Ascending aorta (tissue), 2 donors: ENCODE measurements at regions of chr6 and their contacts with region 1.

Region 1: DNA sequence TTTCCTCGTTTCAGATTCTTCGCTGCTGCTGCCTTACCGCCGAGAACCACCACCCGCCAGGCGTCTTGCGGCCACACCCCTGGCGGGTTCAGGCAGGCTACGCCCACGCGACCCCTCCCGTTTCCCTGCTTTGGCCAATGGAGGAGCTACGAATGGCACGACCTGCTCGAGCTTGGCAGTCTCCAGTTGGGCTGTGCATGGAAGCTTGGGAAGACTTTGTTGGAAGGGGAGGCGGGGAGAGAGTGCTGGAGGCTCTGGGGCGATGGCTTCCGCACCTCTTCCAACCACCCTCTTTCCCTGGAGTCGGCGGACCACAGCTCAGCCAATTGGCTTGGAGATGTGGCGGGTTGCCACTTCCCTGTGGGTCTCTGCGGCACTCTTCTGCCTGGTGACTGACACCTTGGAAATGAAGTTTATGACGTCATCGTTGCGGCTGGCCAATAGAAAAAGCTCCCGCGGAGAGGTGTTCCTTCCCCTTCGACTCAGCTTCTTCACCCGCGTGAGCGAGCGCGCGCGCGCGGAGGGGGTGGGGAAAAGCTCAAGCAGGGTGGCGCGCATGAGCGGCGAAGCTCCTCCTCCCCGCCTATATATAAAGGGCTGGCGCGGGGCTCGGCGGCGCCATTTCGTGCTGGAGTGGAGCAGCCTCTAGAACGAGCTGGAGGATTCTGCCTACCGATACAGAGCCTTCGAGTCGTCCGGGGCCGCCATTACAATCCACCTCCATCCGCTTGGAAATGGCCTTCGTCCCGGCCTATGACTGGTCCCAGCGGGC is 3.4 kb downstream of the BRD2 start:
- DNase-seq: peak; percentile 99 to 100
- H3K4me3 ChIP-seq: peak overlapping the region; percentile 86 to 95
- H3K27ac ChIP-seq: peak overlapping the region; percentile 98 to 99
- H3K4me1 ChIP-seq: peaks cover 3 to 26% of the 10 kb centered on the region in 2 donors
- H3K27me3 ChIP-seq: no peaks in the 10 kb centered on the region
- CTCF ChIP-seq: peak in 1 of 3 experiments; percentile 19

Region 2: GRCh38 chr6:31541658-31542521 is 1429.9 kb before region 1 on chr6 and contains the start of gene DDX39B:
- intact Hi-C with region 1: loop called (anchors 5 kb)
- DNase-seq: peak; percentile 83 to 97
- H3K4me3 ChIP-seq: peak within 1 kb of the TSS; percentile 76 to 88
- H3K27ac ChIP-seq: peak within 1 kb of the TSS; percentile 94 to 95
- H3K4me1 ChIP-seq: peaks cover 13 to 32% of the 10 kb centered on the region in 2 donors
- H3K27me3 ChIP-seq: no peaks in the 10 kb centered on the region
- CTCF ChIP-seq: peak in 1 of 3 experiments; percentile 1
- total RNA-seq, gene DDX39B: 134 TPM

Region 3: GRCh38 chr6:31815025-31815838 is 1156.5 kb before region 1 on chr6 and contains the starts of genes HSPA1A and HSPA1L:
- intact Hi-C with region 1: loop called (anchors 10 kb)
- DNase-seq: peak; percentile 90 to 98
- H3K4me3 ChIP-seq: peak within 1 kb of the TSS; percentile 50 to 72
- H3K27ac ChIP-seq: peak within 1 kb of the TSS; percentile 96
- H3K4me1 ChIP-seq: peaks cover 7 to 24% of the 10 kb centered on the region in 2 donors
- H3K27me3 ChIP-seq: no peaks in the 10 kb centered on the region
- CTCF ChIP-seq: no peak
- total RNA-seq, gene HSPA1A: 288 TPM
- total RNA-seq, gene HSPA1L: not detected

Region 4: DNA sequence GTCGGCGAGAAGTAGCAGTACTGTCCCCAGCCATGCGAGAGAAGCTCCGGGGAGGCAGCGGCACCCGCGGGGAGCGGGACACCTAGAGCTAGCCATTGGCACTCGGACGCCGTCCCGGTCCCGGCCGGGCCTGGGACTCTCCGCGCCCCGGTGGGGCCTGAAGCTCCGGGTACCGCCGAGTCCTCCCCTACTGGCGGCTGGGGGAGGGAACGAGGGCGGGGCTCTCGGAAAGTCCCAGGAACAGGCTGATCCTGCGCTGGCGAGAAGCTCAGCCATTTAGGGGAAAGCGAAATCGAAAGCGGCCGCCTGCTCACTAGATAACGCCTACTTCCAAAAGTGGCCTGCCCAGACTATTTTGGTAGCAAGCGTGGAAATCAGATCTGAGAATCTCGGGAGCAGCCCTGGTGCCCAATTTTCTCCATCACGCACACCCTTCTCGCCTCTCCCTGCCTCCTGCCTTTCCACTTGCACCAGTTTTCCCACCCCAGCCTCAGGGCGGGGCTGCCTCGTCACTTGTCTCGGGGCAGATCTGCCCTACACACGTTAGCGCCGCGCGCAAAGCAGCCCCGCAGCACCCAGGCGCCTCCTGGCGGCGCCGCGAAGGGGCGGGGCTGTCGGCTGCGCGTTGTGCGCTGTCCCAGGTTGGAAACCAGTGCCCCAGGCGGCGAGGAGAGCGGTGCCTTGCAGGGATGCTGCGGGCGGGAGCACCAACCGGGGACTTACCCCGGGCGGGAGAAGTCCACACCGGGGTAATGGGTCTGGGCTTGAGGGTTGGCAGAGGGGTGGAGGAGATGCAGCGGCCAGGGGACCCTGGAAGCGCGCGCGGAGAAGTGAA is 118.0 kb before region 1 on chr6 and contains the starts of genes PSMB9 and TAP1:
- intact Hi-C with region 1: loop called (anchors 2 kb)
- DNase-seq: peak; percentile 89 to 97
- H3K4me3 ChIP-seq: peak within 1 kb of the TSS; percentile 86 to 89
- H3K27ac ChIP-seq: peak within 1 kb of the TSS; percentile 92 to 97
- H3K4me1 ChIP-seq: peaks cover 4 to 9% of the 10 kb centered on the region in 2 donors
- H3K27me3 ChIP-seq: no peaks in the 10 kb centered on the region
- CTCF ChIP-seq: peak; percentile 88 to 95 (median 90)
- total RNA-seq, gene PSMB9: 42.8 TPM
- total RNA-seq, gene TAP1: 51.2 TPM

Region 5: DNA sequence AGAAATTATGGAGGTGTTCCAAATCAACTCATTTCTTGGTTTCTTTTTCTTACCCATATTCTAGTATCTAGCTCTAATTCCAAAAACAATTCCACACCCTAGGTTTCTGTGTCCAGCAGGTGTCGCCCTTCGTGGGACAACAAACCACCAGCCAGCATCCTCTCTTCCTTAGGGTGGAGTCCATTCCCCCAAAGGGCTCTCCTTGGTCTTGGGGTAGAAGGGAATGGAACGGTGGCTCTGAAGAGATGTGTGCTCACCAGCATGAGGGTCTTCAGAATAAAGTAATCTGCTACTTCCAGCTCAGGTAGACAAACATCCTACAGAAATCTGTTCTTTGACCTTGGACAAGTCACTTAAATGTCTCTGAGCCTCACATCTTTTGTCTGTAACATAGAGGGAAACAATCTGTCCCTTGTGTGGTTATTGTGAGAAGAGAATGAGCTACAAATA is 38.1 kb before region 1 on chr6:
- intact Hi-C with region 1: loop called (anchors 5 kb)
- DNase-seq: peak in 1 of 2 donors; percentile 87
- H3K4me3 ChIP-seq: no peak overlapping the region
- H3K27ac ChIP-seq: no peak overlapping the region
- H3K4me1 ChIP-seq: no peaks in the 10 kb centered on the region
- H3K27me3 ChIP-seq: no peaks in the 10 kb centered on the region
- CTCF ChIP-seq: peak; percentile 67 to 81 (median 68)

Region 6: DNA sequence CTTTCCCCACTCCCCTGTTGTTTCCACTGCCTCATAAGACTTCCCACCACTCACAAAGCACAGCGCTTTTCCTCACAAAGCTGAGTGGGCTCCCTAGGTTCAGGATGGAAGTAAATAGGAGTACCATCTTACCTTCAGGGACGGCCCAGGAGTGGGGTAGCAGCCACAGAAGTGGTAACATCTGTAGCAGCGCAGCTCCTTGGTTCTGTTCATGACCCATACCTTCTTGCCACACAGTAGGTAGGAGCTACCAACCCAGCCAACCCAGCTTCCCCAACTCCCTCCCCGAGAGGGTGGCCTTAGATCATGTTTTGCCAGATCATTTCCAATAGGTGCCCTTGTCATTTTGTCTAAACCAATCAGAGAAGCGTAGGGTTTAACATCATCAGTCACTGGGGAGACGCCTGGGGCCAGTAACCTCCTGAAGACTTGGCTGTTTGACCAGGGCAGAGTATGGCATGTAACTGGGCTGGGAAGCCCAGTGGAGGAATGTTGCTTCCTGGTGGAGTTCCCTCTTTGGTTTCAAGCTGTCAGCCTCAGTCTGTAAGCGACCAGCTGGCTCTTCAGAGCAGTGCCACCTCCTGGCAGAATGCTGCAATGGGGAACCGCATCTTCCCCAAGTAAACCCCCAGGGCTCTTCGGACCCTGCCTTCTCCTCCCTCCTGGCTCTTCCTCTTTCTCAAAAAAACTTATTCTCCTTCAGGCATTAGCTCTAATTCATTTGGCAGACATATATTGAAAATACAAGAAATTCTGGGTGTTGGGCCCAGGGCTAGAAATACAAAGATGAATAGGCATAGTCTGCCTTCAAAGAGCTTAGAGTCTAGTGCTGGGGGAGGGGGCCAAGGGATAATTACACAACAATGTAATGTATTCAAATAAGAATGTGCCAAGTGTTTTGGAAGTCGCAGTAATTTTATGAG is 18.7 kb before region 1 on chr6 and contains the start of gene HLA-DMA:
- intact Hi-C with region 1: loop called (anchors 1 kb)
- DNase-seq: peak; percentile 76 to 95
- H3K4me3 ChIP-seq: peak within 1 kb of the TSS in 1 of 2 donors; percentile 53
- H3K27ac ChIP-seq: peak within 1 kb of the TSS; percentile 71 to 72
- H3K4me1 ChIP-seq: peaks cover 0 to 2% of the 10 kb centered on the region in 2 donors
- H3K27me3 ChIP-seq: no peaks in the 10 kb centered on the region
- CTCF ChIP-seq: peak; percentile 74 to 83 (median 83)
- total RNA-seq, gene HLA-DMA: 28.0 TPM

Region 7: GRCh38 chr6:33029328-33030184 is 57.8 kb after region 1 on chr6:
- intact Hi-C with region 1: no loop called
- DNase-seq: no peak
- H3K4me3 ChIP-seq: no peak overlapping the region
- H3K27ac ChIP-seq: peak overlapping the region; percentile 37 to 58
- H3K4me1 ChIP-seq: no peaks in the 10 kb centered on the region
- H3K27me3 ChIP-seq: no peaks in the 10 kb centered on the region
- CTCF ChIP-seq: no peak

Region 8: GRCh38 chr6:33248925-33249731 is 277.4 kb after region 1 on chr6:
- intact Hi-C with region 1: loop called (anchors 2 kb)
- DNase-seq: peak; percentile 97 to 99
- H3K4me3 ChIP-seq: peak overlapping the region; percentile 69
- H3K27ac ChIP-seq: peak overlapping the region; percentile 93 to 94
- H3K4me1 ChIP-seq: peaks cover 4 to 23% of the 10 kb centered on the region in 2 donors
- H3K27me3 ChIP-seq: no peaks in the 10 kb centered on the region
- CTCF ChIP-seq: no peak